Left colon (tissue), 2 donors: ENCODE measurements at regions of chr3 and their contacts with region 1.

Region 1: DNA sequence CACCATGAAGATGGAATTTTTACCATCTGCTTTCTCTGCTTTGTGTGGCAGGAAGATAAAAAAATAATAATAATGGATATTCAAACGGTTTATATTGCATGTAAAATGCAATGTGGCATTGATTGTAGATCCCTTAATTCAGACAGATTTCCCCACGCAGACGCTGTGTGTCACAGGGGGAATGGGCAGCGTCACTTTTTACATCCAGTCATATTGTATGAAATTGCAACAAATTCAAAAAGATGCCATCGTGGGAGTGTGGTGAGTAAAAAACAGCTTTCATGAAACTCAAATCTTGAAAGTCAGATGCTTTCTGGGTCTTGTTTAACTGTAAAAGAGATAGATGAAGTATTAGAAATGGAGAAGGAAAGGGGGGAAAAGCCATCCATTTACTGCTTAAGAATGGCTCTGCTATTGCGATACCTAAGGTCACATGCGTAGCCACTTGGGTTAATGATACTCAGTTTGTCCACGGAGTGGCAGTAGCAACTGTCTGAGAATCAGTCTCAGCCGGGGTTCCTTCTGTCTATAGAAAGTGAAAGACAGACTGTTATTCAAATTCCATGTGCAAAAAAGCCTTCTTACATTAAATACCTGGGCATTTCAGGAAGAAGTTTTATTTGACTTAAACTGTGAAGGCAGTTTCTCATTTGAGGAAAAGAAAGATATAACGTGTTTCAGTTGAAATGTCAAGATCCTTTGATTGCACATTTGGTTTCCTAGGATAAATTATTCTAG is 28.5 kb downstream of the BTD start:
- DNase-seq: peak; percentile 49 to 59
- ATAC-seq: peak; percentile 99

Region 2: GRCh38 chr3:15783361-15783969 is 153.4 kb after region 1 on chr3:
- intact Hi-C with region 1: no loop called
- DNase-seq: no peak
- ATAC-seq: no peak

Region 3: DNA sequence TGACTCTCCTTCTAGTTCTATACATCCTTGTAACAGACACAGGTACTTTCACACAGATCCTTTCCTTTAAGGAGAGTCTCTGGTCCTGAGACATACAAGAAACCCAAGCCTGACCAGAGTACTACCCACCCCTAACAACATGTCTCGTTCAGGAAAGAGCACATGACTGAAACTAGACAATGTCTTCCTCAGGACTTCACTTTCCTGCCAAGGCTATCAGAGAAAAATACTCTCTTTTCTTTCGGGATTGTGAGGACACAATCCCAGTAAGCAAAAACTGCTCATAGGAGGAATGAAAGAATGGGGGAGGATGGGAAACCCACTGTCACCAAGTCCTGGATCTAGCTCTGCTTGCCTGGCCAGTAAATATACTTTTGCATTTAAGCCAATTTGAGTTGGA is 179.3 kb after region 1 on chr3:
- intact Hi-C with region 1: loop called in 1 of 2 experiments (anchors 2 kb)
- DNase-seq: no peak
- ATAC-seq: no peak

Region 4: GRCh38 chr3:15899388-15899787 is 269.4 kb after region 1 on chr3:
- intact Hi-C with region 1: no loop called
- DNase-seq: no peak
- ATAC-seq: no peak